ENCODE measurements at regions of chr10 and their contacts with region 1.

Region 1: GRCh38 chr10:73625884-73626752 is 15.2 kb downstream of the MYOZ1 start:
- DNase-seq: peak; percentile 96
- H3K4me3 Mint-ChIP-seq: peak overlapping the region; percentile 94
- H3K27ac Mint-ChIP-seq: peak overlapping the region; percentile 93
- H3K4me1 Mint-ChIP-seq: peaks cover 17% of the 10 kb centered on the region
- H3K27me3 Mint-ChIP-seq: no peaks in the 10 kb centered on the region

Region 2: GRCh38 chr10:73246783-73247508 is 379.2 kb before region 1 on chr10 and contains the start of gene DNAJC9:
- CTCF ChIA-PET with region 1: interaction called, 4 read pairs
- POLR2A ChIA-PET with region 1: interaction called, 3 read pairs
- intact Hi-C with region 1: loop called (anchors 1 kb)
- DNase-seq: peak; percentile 99
- H3K4me3 Mint-ChIP-seq: peak within 1 kb of the TSS; percentile 99
- H3K27ac Mint-ChIP-seq: peak within 1 kb of the TSS; percentile 94
- H3K4me1 Mint-ChIP-seq: peaks cover 61% of the 10 kb centered on the region
- H3K27me3 Mint-ChIP-seq: no peaks in the 10 kb centered on the region
- total RNA-seq, gene DNAJC9: 45.8 to 49.3 TPM